ENCODE measurements at regions of chr6 and their contacts with region 1.

Region 1: DNA sequence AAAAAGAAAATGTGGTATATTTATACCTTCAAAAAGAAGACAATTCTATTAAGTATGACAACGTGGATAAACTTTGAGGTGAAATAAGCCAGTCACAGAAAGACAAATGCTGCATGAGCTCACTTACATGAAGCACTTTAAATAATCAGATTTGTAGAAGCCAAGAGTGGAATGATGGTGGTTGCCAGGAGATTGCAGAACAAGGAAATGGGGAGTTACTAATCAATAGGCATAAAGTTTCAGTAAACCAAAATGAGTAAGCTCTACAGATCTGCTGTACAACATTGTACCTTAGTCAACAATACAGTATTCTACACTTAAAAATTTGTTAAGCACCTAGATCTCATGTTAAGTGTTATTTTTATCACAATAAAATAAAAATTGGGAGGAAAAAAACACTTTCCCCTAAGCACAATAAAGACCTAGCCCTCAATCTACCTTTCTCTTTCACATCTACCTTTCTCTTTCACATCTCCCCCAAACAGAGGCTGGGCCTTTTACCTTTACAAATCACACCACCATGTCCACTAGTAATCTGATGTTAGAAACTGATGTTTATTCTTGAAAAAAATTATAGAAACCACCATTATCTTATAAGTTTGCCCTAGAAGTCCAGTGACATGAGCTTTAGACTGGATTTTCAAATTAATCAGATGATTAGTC is 73.9 kb downstream of the PKIB start:
- DNase-seq: no peak
- ATAC-seq: no peak

Region 2: GRCh38 chr6:122709922-122710512 is 25.9 kb after region 1 on chr6:
- intact Hi-C with region 1: loop called (anchors 1 kb)
- DNase-seq: no peak
- ATAC-seq: peak; percentile 76

Region 3: DNA sequence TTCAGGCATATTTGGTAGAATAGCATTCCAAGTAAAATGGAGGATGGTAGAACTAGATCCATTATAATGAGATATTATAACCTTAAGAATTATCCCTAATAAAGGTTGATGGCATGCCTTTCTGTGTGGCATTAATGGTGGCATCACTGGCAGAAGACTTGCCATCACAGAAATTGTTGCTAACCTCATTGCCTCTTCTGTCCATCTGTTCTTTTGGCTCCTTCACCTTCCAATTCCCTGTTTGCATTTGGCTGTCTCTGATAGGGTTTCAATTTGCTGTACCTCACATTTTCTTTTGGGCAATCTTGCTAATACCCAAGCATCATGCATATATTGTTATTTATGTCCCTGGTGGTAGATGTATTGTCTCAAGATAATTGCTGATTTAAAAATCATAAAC is 203.8 kb after region 1 on chr6:
- intact Hi-C with region 1: no loop called
- DNase-seq: no peak
- ATAC-seq: no peak

Measured in sciatic nerve (tissue), 2 donors.